Heart left ventricle (tissue), 16 donors: ENCODE measurements at regions of chr12 and their contacts with region 1.

Region 1: DNA sequence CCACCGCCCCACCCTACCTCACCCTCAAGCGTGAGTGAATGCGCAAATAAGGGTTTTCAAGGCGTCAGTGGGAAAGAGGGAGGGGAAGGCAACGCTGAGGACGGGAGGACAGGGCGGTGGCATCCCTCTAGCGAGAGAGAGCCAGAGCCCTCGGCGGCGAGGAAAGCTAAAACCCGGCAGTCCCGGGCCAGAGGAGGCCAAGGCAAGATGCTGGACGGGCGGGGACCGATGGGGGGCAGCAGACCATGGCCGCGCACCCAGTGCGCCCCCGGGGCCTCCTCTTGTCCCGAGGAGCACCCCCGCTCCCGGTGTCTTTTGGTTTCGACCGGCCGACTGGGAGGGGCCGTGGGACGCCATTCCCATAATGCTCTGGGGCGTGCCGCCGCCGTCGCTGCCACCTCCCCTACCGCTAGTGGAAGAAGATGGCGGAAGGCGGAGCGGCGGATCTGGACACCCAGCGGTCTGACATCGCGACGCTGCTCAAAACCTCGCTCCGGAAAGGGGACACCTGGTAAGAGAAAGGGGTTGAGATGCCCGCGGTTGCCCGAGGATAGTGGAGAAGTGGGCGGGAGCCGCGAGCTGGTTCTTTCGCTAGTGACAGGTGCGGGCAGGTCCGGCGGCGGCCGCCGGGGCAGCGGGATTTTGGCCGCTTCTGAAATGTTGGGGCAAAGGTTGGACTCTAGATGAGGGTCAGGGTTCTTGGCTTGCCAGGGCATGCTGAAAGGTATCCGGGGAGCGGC is at the start of gene USP15:
- DNase-seq: peak; percentile 97 to 99 (median 98)
- ATAC-seq: peak; percentile 98
- H3K4me3 ChIP-seq: peak within 1 kb of the TSS; percentile 50 to 97 (median 89)
- H3K27ac ChIP-seq: peak within 1 kb of the TSS; percentile 79 to 98 (median 94)
- H3K4me1 ChIP-seq: peaks cover 0 to 72% (median 43%) of the 10 kb centered on the region in 12 donors
- H3K27me3 ChIP-seq: no peaks in the 10 kb centered on the region
- CTCF ChIP-seq: peak; percentile 73 to 92 (median 85)
- POLR2A ChIP-seq: peak in 1 of 2 donors; percentile 73
- total RNA-seq, gene USP15: 33.3 to 69.7 (median 62.2) TPM

Region 2: GRCh38 chr12:62239571-62239970 is 20.6 kb before region 1 on chr12:
- intact Hi-C with region 1: no loop called
- DNase-seq: no peak
- ATAC-seq: no peak
- H3K4me3 ChIP-seq: no peak overlapping the region
- H3K27ac ChIP-seq: no peak overlapping the region
- H3K4me1 ChIP-seq: no peaks in the 10 kb centered on the region
- H3K27me3 ChIP-seq: no peaks in the 10 kb centered on the region
- CTCF ChIP-seq: no peak
- POLR2A ChIP-seq: no peak

Region 3: GRCh38 chr12:62319058-62319457 is 58.9 kb after region 1 on chr12:
- intact Hi-C with region 1: loop called in 2 of 10 experiments (anchors 10 kb)
- DNase-seq: no peak
- ATAC-seq: peak in 2 of 4 donors; percentile 37 to 44
- H3K4me3 ChIP-seq: no peak overlapping the region
- H3K27ac ChIP-seq: no peak overlapping the region
- H3K4me1 ChIP-seq: peaks cover 0 to 20% (median 0%) of the 10 kb centered on the region in 12 donors
- H3K27me3 ChIP-seq: no peaks in the 10 kb centered on the region
- CTCF ChIP-seq: no peak
- POLR2A ChIP-seq: no peak

Region 4: DNA sequence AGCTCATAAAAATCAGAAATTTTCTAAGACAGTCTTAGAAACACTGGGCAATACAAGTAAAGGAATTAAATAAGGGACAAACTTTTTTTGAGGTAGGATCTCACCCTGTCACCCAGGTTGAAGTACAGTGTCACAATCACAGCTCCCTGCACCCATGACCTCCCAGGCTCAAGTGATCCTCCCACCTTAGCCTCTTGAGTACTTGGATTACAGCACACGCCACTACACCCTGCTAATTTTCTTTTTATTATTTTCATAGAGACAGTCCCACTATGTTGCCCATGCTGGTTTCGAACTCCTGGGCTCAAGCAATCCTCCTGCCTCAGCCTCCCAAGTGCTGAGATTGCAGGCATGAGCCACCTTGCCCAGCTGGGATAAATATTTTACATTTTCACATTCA is 90.4 kb after region 1 on chr12:
- intact Hi-C with region 1: no loop called
- DNase-seq: no peak
- ATAC-seq: no peak
- H3K4me3 ChIP-seq: no peak overlapping the region
- H3K27ac ChIP-seq: no peak overlapping the region
- H3K4me1 ChIP-seq: peaks cover 0 to 4% (median 0%) of the 10 kb centered on the region in 12 donors
- H3K27me3 ChIP-seq: no peaks in the 10 kb centered on the region
- CTCF ChIP-seq: no peak
- POLR2A ChIP-seq: no peak

Region 5: GRCh38 chr12:62361048-62361447 is 100.9 kb after region 1 on chr12:
- intact Hi-C with region 1: loop called in 1 of 10 experiments (anchors 10 kb)
- DNase-seq: no peak
- ATAC-seq: no peak
- H3K4me3 ChIP-seq: no peak overlapping the region
- H3K27ac ChIP-seq: no peak overlapping the region
- H3K4me1 ChIP-seq: peaks cover 0 to 4% (median 0%) of the 10 kb centered on the region in 12 donors
- H3K27me3 ChIP-seq: no peaks in the 10 kb centered on the region
- CTCF ChIP-seq: no peak
- POLR2A ChIP-seq: no peak

Region 6: DNA sequence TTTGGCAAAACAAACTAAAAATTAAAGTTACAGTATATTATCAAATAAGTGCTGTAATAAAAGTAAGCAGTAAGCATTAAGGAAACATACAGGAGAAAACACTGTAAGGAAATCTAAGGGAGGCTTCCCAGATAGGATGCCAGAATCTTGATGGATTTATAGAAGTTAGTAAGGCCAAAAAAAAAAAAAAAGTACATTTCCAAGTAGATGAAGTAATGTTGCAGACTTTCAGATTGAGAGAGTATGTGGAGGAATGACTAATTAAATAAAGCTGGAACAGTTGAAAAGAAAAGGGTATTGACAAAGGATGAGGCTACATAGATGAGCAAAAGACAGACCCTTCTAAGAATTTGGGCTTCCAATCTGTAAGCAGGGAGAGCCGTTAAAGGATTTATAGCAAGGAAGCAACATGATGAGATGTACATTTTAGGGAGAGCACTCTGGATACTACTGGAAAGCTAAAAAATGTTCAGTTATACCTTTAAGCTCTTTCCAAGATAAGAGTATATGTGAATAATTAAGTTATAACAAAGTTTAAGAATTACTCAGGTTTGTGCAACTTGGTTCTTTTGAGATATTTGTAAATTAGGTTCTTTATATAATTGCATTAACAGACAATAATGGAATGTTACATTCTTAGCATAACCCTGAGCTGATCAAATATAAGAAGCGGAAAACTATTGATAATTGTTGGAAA is 119.0 kb after region 1 on chr12:
- intact Hi-C with region 1: loop called in 3 of 10 experiments (anchors 10 kb)
- DNase-seq: no peak
- ATAC-seq: no peak
- H3K4me3 ChIP-seq: no peak overlapping the region
- H3K27ac ChIP-seq: no peak overlapping the region
- H3K4me1 ChIP-seq: peaks cover 0 to 5% (median under 1%) of the 10 kb centered on the region in 12 donors
- H3K27me3 ChIP-seq: no peaks in the 10 kb centered on the region
- CTCF ChIP-seq: no peak
- POLR2A ChIP-seq: no peak

Region 7: DNA sequence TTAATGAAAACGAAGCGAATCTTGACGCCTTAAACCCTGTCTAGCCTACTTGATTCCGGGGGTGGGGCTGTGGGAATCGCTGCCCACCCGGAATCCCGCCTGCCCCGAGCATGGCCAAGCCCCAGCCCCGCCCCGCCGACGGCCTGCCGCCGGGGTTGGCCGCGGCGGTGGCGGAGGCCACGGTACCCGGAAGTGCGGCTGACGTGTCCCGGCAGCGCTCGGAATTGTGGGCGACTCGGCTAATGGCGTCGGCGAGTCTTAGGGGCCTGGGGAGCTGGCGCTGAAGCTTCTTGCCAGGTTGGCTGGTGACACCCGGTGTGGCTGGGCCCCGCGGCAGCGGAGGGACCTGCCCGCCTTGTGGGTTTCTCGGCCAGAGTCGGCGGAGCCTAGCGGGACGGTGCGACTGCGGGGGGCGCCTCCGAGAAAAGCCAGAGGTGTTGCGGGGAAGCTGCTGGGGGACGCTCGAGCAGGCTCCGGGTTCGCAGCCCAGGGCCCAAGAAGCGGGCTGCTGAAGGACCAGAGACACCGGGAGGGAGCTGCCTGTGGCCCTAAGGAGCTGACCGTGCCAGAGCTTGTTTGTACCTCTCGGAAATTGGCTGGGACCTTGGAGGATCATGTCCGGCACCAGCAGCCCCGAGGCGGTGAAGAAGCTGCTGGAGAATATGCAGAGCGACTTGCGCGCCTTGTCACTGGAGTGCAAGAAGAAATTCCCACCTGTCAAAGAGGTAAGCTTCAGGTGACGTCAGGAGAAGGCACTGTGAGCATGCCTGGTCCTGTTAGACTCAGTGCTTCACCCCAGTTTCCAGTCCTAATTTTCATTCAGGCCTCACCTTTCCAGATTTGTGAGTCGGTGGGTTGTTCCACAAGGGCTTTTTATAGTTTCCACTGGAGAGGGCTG is 206.7 kb after region 1 on chr12 and contains the start of gene MON2:
- intact Hi-C with region 1: loop called in 1 of 10 experiments (anchors 5 kb)
- DNase-seq: peak; percentile 92 to 95 (median 93)
- ATAC-seq: peak; percentile 98 to 100 (median 100)
- H3K4me3 ChIP-seq: peak within 1 kb of the TSS; percentile 67 to 98 (median 86)
- H3K27ac ChIP-seq: peak within 1 kb of the TSS; percentile 68 to 94 (median 88)
- H3K4me1 ChIP-seq: peaks cover 0 to 42% (median 30%) of the 10 kb centered on the region in 12 donors
- H3K27me3 ChIP-seq: no peaks in the 10 kb centered on the region
- CTCF ChIP-seq: no peak
- POLR2A ChIP-seq: peak in 1 of 2 donors; percentile 78
- total RNA-seq, gene MON2: 14.8 to 30.6 (median 17.7) TPM